Calu3 (cell line): ENCODE measurements at regions of chr16 and their contacts with region 1.

Region 1: GRCh38 chr16:56519459-56520250 is at the start of gene BBS2:
- DNase-seq: peak; percentile 95
- H3K4me3 Mint-ChIP-seq: peak within 1 kb of the TSS; percentile 81
- H3K27ac Mint-ChIP-seq: peak within 1 kb of the TSS; percentile 29
- H3K4me1 Mint-ChIP-seq: peaks cover 10% of the 10 kb centered on the region
- H3K27me3 Mint-ChIP-seq: peaks cover 17% of the 10 kb centered on the region
- CTCF ChIP-seq: peak; percentile 17
- total RNA-seq, gene BBS2: 35.5 and 36.4 TPM in 2 replicates

Region 2: GRCh38 chr16:56281256-56281805 is 238.3 kb before region 1 on chr16:
- CTCF ChIA-PET with region 1: no interaction called
- intact Hi-C with region 1: no loop called
- DNase-seq: no peak
- H3K4me3 Mint-ChIP-seq: no peak overlapping the region
- H3K27ac Mint-ChIP-seq: no peak overlapping the region
- H3K4me1 Mint-ChIP-seq: peaks cover 9% of the 10 kb centered on the region
- H3K27me3 Mint-ChIP-seq: peaks cover 47% of the 10 kb centered on the region
- CTCF ChIP-seq: peak; percentile 23

Region 3: DNA sequence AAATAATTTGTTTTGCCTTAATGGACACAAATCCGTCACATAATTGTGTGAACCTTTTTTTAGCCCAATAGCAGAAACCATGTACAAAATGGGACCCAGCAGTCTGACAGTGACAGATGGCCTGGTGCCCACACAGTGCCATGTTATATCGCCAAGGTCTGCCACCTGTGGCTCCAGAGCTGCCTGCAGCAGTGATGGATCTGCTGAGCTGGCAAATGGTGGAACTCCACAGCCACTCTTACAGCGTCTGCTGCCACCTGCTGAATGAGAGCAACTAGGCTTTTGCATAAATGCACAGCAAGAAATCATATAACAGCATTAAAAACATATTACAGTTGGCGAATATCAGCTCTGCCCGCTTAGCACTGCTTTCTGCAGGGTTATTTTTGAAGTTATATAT is 269.7 kb after region 1 on chr16:
- CTCF ChIA-PET with region 1: no interaction called
- intact Hi-C with region 1: loop called (anchors 10 kb)
- DNase-seq: peak; percentile 59
- H3K4me3 Mint-ChIP-seq: no peak overlapping the region
- H3K27ac Mint-ChIP-seq: no peak overlapping the region
- H3K4me1 Mint-ChIP-seq: peaks cover 11% of the 10 kb centered on the region
- H3K27me3 Mint-ChIP-seq: no peaks in the 10 kb centered on the region
- CTCF ChIP-seq: no peak